Endothelial cell of umbilical vein (primary cell): ENCODE measurements at regions of chr3 and their contacts with region 1.

Region 1: DNA sequence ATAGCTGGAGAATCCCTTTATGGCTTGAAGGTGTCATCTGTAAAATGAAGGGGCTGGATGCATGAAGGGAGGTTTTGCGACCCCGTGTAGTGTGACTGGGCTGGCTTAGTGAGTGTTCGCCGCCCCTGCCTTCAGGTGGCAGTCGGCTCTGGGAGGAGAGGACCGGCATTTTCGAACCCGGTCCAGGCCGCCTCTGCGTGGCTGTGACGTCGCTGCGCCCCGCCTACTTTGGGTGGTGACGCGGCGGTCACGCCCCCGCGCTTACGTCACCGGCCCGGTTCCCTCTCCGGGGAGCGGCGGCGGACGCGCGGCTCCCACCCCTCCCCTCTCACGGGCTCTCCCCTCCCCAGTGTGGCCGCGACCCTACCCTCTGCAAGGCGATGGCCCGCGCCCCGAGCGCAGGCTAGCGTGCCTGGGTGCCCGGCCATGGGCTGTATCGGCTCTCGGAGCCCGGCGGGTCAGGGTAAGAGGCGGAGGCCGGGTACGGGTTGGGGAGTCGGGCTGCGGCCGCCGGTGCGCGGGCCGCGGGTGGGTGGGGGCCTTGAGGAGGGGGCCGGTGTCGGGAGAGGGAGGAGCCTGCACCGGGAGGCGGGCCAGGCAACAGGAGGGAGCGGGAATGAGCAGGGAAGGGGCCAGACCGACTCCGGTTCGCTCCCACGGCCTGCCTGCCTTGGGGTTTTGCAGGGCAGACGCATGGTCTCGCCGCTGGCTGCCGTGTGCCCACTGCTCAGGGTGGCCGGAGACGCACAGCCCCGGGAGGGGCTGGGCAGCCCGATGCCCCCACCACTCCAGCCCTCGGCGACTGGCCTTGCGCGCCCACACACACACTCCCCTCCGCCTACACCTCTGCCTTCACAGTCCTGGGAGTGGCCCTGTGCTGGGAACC is 1.5 kb upstream of the FAM131A start:
- DNase-seq: peak; percentile 81
- H3K4me3 ChIP-seq: peak overlapping the region; percentile 31 to 62 (median 54)
- H3K27ac ChIP-seq: peak overlapping the region; percentile 99
- H3K4me1 ChIP-seq: peaks cover 80% of the 10 kb centered on the region
- H3K27me3 ChIP-seq: no peaks in the 10 kb centered on the region
- CTCF ChIP-seq: no peak
- POLR2A ChIP-seq: no peak

Region 2: GRCh38 chr3:184298759-184299496 is 37.0 kb before region 1 on chr3 and contains the start of gene PSMD2:
- CTCF ChIA-PET with region 1: no interaction called
- POLR2A ChIA-PET with region 1: no interaction called
- dilution Hi-C with region 1: no loop called
- intact Hi-C with region 1: loop called (anchors 2 kb)
- DNase-seq: peak; percentile 96
- H3K4me3 ChIP-seq: peak within 1 kb of the TSS; percentile 71 to 89 (median 88)
- H3K27ac ChIP-seq: peak within 1 kb of the TSS; percentile 70
- H3K4me1 ChIP-seq: peaks cover 13% of the 10 kb centered on the region
- H3K27me3 ChIP-seq: peaks cover 0 to 3% of the 10 kb centered on the region in 2 experiments
- CTCF ChIP-seq: no peak
- POLR2A ChIP-seq: peak; percentile 85
- total RNA-seq, gene PSMD2: 400 and 435 TPM in 2 replicates

Region 3: GRCh38 chr3:184314363-184314699 is 21.6 kb before region 1 on chr3 and contains the start of gene EIF4G1:
- CTCF ChIA-PET with region 1: interaction called, 5 read pairs
- POLR2A ChIA-PET with region 1: interaction called, 5 read pairs
- dilution Hi-C with region 1: no loop called
- intact Hi-C with region 1: loop called (anchors 1 kb)
- DNase-seq: peak; percentile 94
- H3K4me3 ChIP-seq: peak within 1 kb of the TSS; percentile 37 to 84 (median 59)
- H3K27ac ChIP-seq: peak within 1 kb of the TSS; percentile 64
- H3K4me1 ChIP-seq: peaks cover 28% of the 10 kb centered on the region
- H3K27me3 ChIP-seq: no peaks in the 10 kb centered on the region
- CTCF ChIP-seq: no peak
- POLR2A ChIP-seq: peak; percentile 79
- total RNA-seq, gene EIF4G1: 524 and 532 TPM in 2 replicates

Region 4: GRCh38 chr3:184320099-184320445 is 15.8 kb before region 1 on chr3:
- CTCF ChIA-PET with region 1: interaction called, 7 read pairs
- POLR2A ChIA-PET with region 1: interaction called, 5 read pairs
- dilution Hi-C with region 1: no loop called
- intact Hi-C with region 1: loop called (anchors 1 kb)
- DNase-seq: peak; percentile 94
- H3K4me3 ChIP-seq: no peak overlapping the region
- H3K27ac ChIP-seq: peak overlapping the region; percentile 38
- H3K4me1 ChIP-seq: peaks cover 45% of the 10 kb centered on the region
- H3K27me3 ChIP-seq: no peaks in the 10 kb centered on the region
- CTCF ChIP-seq: no peak
- POLR2A ChIP-seq: no peak

Region 5: DNA sequence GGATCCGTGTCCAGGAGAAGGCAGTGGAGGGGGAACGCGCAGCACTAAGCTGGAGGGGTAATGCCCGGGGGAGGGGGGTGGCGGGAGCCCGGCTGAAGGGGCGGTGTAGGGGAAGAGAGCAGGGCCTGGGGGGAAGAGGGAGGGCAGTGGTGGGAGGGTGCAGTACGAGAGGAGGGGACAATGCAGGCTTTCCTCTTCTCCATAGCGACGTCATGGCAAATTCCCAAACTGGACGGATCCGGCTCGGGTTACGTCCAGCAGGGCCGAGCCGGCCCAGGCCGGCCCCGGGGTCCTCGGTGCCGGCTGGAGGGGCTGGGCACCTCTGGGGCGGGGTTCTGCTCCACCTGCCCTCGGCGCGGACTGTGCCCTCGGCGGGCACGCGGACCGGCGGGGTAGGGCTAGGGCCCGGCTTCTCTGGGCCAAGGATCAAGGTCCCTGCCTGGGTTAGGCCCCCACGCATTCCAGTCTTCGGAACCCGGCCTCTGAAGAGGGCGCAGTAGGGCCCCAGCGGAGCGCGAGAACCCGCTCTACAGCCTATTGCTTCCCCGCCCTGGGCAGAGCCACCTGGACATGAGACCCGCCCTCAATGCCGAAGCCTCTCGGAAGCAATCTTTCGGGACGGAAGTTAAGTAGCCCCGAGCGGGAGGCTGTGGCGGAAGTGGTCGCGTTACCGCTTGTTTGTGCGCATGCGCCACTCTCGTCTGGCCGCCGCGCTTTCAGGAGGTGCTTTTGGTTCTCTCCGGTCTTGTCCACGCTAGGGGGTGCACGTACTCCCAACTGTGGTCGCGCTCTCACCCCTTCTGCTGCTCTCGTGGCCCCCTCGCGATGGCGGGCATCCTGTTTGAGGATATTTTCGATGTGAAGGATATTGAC is 27.0 kb after region 1 on chr3:
- CTCF ChIA-PET with region 1: interaction called, 5 read pairs
- POLR2A ChIA-PET with region 1: interaction called, 3 read pairs
- dilution Hi-C with region 1: no loop called
- intact Hi-C with region 1: loop called (anchors 1 kb)
- DNase-seq: peak; percentile 96
- H3K4me3 ChIP-seq: peak overlapping the region; percentile 38 to 87 (median 59)
- H3K27ac ChIP-seq: peak overlapping the region; percentile 86
- H3K4me1 ChIP-seq: peaks cover 17% of the 10 kb centered on the region
- H3K27me3 ChIP-seq: no peaks in the 10 kb centered on the region
- CTCF ChIP-seq: peak; percentile 55 to 71
- POLR2A ChIP-seq: peak; percentile 87

Region 6: GRCh38 chr3:184395320-184395660 is 59.4 kb after region 1 on chr3:
- CTCF ChIA-PET with region 1: no interaction called
- POLR2A ChIA-PET with region 1: no interaction called
- dilution Hi-C with region 1: no loop called
- intact Hi-C with region 1: no loop called
- DNase-seq: no peak
- H3K4me3 ChIP-seq: no peak overlapping the region
- H3K27ac ChIP-seq: no peak overlapping the region
- H3K4me1 ChIP-seq: no peaks in the 10 kb centered on the region
- H3K27me3 ChIP-seq: peaks cover 15% of the 10 kb centered on the region in 2 experiments
- CTCF ChIP-seq: no peak
- POLR2A ChIP-seq: no peak

Region 7: GRCh38 chr3:184417619-184418327 is 81.9 kb after region 1 on chr3:
- CTCF ChIA-PET with region 1: no interaction called
- POLR2A ChIA-PET with region 1: no interaction called
- dilution Hi-C with region 1: no loop called
- intact Hi-C with region 1: no loop called
- DNase-seq: peak; percentile 62
- H3K4me3 ChIP-seq: no peak overlapping the region
- H3K27ac ChIP-seq: no peak overlapping the region
- H3K4me1 ChIP-seq: no peaks in the 10 kb centered on the region
- H3K27me3 ChIP-seq: no peaks in the 10 kb centered on the region
- CTCF ChIP-seq: peak; percentile 88 to 98
- POLR2A ChIP-seq: no peak

Region 8: DNA sequence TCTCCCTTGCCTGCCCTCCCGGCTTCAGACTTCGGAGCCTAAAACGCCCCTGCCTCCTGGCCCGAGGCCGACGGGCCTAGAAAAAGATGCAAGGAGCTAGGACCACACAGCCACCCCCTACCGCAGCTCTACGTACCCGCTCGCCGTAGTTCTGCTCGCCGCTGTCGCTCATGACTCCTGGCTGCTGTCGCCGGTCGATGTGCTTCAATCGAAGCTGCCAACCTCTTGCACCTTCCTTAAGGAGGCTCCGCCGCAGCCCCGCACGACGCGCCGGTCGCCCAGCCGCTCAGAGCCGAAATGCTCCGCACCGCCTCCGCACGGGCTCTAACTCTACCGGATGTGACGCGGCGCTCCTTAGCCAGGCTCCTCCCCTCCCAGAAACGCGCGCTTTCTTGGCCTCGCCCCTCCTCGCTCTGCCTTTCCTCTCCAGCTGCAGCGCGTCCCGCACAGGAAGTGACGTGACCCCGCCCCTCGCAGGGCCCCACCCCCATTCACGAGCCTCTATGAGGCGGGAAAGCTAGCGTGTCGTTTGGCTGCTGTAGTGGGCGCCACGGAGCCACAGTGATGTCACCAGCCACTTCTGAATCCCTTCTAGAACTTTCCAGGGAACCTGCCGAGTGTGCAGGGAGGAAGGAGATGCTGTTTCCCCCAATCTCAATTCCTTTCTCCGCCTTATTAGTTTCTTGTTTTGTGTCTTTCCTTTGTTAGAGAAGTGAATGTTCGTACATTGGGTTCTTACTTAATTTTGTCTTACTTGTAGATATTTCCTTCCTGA is 1602.0 kb after region 1 on chr3 and contains the start of gene TRA2B:
- CTCF ChIA-PET with region 1: no interaction called
- POLR2A ChIA-PET with region 1: no interaction called
- dilution Hi-C with region 1: no loop called
- intact Hi-C with region 1: loop called (anchors 10 kb)
- DNase-seq: peak; percentile 99
- H3K4me3 ChIP-seq: peak within 1 kb of the TSS; percentile 41 to 98 (median 97)
- H3K27ac ChIP-seq: peak within 1 kb of the TSS; percentile 76
- H3K4me1 ChIP-seq: peaks cover 26% of the 10 kb centered on the region
- H3K27me3 ChIP-seq: peaks cover 0 to 3% of the 10 kb centered on the region in 2 experiments
- CTCF ChIP-seq: peak in 1 of 2 donors; percentile 38
- POLR2A ChIP-seq: peak; percentile 99
- total RNA-seq, gene TRA2B: 199 and 214 TPM in 2 replicates